Sigmoid colon (tissue), 7 donors: ENCODE measurements at regions of chr17 and their contacts with region 1.

Region 1: GRCh38 chr17:75515496-75516254 is at the start of gene CASKIN2:
- DNase-seq: peak; percentile 98
- H3K4me3 ChIP-seq: peak within 1 kb of the TSS; percentile 73 to 96 (median 89)
- H3K27ac ChIP-seq: peak within 1 kb of the TSS; percentile 85 to 91 (median 90)
- H3K4me1 ChIP-seq: peaks cover 5 to 64% (median 51%) of the 10 kb centered on the region in 4 donors
- H3K27me3 ChIP-seq: no peaks in the 10 kb centered on the region
- CTCF ChIP-seq: peak; percentile 96 to 99 (median 98)
- EP300 ChIP-seq: no peak
- POLR2A ChIP-seq: no peak
- total RNA-seq, gene CASKIN2: 10.0 to 14.7 (median 10.2) TPM

Region 2: DNA sequence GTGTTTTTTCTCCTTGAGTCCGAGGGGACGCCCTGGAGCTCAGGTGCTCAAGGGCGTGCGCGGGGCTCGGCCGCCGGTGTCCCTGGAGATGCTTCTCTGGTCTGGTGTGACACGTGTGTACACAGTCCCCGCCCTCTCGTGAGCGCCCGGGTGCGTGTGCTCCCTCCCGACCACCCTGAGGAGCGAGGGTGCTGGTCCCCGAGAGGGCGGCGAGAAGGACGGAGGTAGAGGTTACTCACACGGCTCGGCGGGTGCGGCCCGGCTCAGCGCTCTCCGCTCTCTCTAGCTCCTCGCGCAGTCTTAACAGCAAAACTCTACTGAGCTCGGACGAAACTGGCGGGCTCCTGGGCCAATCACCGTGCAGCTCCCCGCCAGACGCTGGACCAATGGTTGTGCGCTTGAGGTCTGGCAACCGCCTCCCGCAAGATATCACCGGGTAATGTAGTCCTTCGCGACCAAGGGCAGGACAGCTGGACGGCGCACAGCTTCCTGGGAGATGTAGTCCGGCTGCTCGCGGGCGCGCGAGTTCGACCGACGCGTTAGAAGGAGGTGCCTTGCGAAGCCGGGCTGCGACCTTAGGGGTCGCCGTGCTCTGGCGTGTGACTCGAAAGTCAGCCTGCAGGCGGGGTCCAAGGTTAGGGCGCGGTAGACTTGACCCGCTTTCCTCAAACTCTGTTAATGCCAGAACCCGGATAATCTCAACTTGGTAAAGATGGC is 226.4 kb before region 1 on chr17 and contains the start of gene SLC25A19:
- intact Hi-C with region 1: loop called (anchors 5 kb)
- DNase-seq: peak; percentile 100
- H3K4me3 ChIP-seq: peak within 1 kb of the TSS; percentile 65 to 78 (median 74)
- H3K27ac ChIP-seq: peak within 1 kb of the TSS; percentile 90 to 97 (median 94)
- H3K4me1 ChIP-seq: peaks cover 0 to 15% (median 5%) of the 10 kb centered on the region in 4 donors
- H3K27me3 ChIP-seq: no peaks in the 10 kb centered on the region
- CTCF ChIP-seq: no peak
- EP300 ChIP-seq: no peak
- POLR2A ChIP-seq: peak; percentile 63 to 78
- total RNA-seq, gene SLC25A19: 8.7 to 19.6 (median 14.7) TPM

Region 3: GRCh38 chr17:75430159-75430974 is 85.3 kb before region 1 on chr17:
- intact Hi-C with region 1: loop called (anchors 1 kb)
- DNase-seq: no peak
- H3K4me3 ChIP-seq: no peak overlapping the region
- H3K27ac ChIP-seq: peak overlapping the region; percentile 72 to 82 (median 80)
- H3K4me1 ChIP-seq: peaks cover 0 to 39% (median 26%) of the 10 kb centered on the region in 4 donors
- H3K27me3 ChIP-seq: no peaks in the 10 kb centered on the region
- CTCF ChIP-seq: no peak
- EP300 ChIP-seq: no peak
- POLR2A ChIP-seq: no peak

Region 4: DNA sequence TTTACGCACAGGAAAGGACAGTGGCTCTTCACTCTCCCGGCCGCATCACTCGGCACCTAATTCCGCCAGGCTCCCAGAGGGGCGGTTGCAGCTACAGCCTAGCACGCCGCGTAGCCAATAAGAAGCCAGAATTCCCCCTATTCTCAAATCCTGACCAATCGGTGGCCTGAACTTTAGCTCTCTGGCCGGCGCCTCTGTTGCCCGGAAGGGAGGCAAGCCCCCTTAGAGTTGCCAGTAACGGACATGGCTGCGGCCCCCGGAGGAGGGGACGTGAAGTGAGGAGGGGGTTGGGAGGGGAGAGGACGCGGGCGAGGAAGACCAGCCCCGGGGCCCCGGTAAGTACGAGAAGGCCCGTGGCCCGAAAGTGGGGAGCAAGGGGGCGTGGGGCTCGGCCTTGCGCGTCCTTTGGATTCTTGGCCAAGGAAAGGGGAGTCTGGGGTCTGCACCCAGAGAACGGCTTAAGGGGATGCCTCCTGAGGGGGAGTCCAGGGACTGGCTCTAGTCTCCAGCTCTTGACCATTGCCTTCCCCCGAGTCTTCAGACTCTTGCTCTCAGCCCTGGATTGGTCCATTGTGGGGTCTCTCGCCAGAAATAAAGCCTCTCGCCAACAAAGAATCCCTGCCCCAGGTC is 59.1 kb before region 1 on chr17 and contains the start of gene TMEM94:
- intact Hi-C with region 1: loop called (anchors 2 kb)
- DNase-seq: peak; percentile 99
- H3K4me3 ChIP-seq: peak within 1 kb of the TSS; percentile 69 to 86 (median 78)
- H3K27ac ChIP-seq: peak within 1 kb of the TSS; percentile 85 to 91 (median 88)
- H3K4me1 ChIP-seq: peaks cover 0 to 28% (median 21%) of the 10 kb centered on the region in 4 donors
- H3K27me3 ChIP-seq: no peaks in the 10 kb centered on the region
- CTCF ChIP-seq: no peak
- EP300 ChIP-seq: no peak
- POLR2A ChIP-seq: peak in 1 of 2 donors; percentile 34
- total RNA-seq, gene TMEM94: 15.3 to 74.8 (median 32.4) TPM

Region 5: DNA sequence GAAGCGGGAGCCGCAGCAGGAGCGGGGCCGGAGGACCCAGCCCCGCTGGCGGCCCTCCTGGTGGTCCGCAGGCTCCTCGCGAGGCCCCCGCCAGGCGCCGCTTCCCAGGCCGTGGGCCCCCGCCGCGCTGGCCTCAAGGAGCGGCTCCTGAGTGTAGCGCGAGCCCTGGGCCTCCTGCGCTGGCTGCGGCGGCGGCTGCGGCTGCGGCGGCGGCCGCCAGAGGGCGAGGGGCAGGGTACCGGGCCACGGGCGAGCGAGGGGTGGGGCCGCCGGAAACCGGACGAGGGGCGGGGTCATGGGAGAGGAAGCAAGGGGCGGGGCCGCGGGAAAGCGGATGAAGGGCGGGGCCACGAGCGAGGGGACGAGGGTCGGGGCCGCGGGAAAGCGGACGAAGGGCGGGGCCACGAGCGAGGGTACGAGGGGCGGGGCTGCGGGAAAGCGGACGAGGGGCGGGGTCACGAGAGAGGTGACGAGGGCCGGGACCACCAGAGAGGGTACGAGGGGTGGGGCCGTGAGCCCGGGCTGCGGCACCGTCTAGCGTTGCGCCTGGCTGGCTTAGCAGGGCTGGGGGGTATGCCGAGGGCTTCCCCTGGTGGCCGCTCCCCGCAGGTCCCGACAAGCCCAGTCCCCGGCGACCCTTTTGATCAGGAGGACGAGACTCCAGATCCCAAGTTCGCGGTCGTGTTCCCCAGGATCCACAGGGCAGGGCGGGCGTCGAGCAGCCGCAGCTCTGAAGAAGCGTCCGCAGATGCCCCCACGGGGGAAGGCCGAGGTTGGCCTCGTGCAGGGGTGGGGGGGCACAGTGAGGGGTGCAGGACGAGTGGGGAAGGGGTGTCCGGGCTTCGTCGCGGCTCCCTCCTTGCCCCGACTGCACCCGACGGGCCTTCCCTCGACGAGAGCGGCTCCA is 73.6 kb after region 1 on chr17:
- intact Hi-C with region 1: loop called (anchors 1 kb)
- DNase-seq: peak; percentile 95
- H3K4me3 ChIP-seq: peak overlapping the region; percentile 52 to 69 (median 67)
- H3K27ac ChIP-seq: peak overlapping the region; percentile 80 to 94 (median 88)
- H3K4me1 ChIP-seq: peaks cover 3 to 22% (median 12%) of the 10 kb centered on the region in 4 donors
- H3K27me3 ChIP-seq: peaks cover 0 to 5% (median 0%) of the 10 kb centered on the region in 3 donors
- CTCF ChIP-seq: peak; percentile 5 to 74 (median 30)
- EP300 ChIP-seq: no peak
- POLR2A ChIP-seq: no peak